A549 (cell line): ENCODE measurements at regions of chr7 and their contacts with region 1.

Region 1: GRCh38 chr7:4631664-4632171 is 50.4 kb upstream of the FOXK1 start:
- DNase-seq: peak; percentile 96 to 98
- ATAC-seq: peak; percentile 97 to 98
- H3K4me3 ChIP-seq: peak overlapping the region; percentile 24
- H3K27ac ChIP-seq: peak overlapping the region; percentile 84 to 87
- H3K4me1 ChIP-seq: peaks cover 27% of the 10 kb centered on the region
- CTCF ChIP-seq: peak; percentile 86
- EP300 ChIP-seq: peak in 1 of 2 experiments; percentile 58; a peak in 1 of 5 replicates
- POLR2A ChIP-seq: 0 out of 2 replicates have a peak, but pooled peaks have one; percentile 16
- RAD21 ChIP-seq: peak; percentile 96

Region 2: DNA sequence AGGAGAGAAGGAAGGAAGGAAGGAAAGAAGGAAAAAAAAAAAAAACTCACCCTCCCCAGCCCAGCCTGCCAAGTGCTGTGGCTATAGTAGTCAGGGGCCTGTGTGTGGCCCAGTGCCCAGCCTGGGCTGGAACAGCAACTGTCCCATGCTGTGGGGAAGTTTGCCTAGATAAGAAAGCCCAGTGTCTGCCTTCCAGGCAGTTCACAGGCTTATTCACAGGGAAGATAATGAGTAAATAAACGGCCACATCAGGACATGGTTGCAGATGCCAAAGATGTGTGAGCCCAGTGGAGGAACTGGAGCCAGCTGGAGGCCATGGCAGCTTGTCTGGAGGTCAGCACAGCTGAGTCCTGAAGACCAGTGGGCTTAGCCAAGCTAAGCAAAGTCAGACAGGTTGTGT is 82.0 kb before region 1 on chr7:
- CTCF ChIA-PET with region 1: no interaction called
- POLR2A ChIA-PET with region 1: no interaction called
- DNase-seq: no peak
- ATAC-seq: no peak
- H3K4me3 ChIP-seq: no peak overlapping the region
- H3K27ac ChIP-seq: no peak overlapping the region
- H3K4me1 ChIP-seq: no peaks in the 10 kb centered on the region
- CTCF ChIP-seq: no peak
- EP300 ChIP-seq: no peak
- POLR2A ChIP-seq: no peak
- RAD21 ChIP-seq: no peak

Region 3: GRCh38 chr7:4610768-4611467 is 20.8 kb before region 1 on chr7:
- CTCF ChIA-PET with region 1: interaction called, 63 read pairs
- POLR2A ChIA-PET with region 1: no interaction called
- DNase-seq: peak; percentile 76 to 82
- ATAC-seq: peak; percentile 88 to 94
- H3K4me3 ChIP-seq: no peak overlapping the region
- H3K27ac ChIP-seq: peak overlapping the region; percentile 23 to 33; a peak in 3 of 6 replicates
- H3K4me1 ChIP-seq: no peaks in the 10 kb centered on the region
- CTCF ChIP-seq: peak; percentile 84
- EP300 ChIP-seq: no peak
- POLR2A ChIP-seq: no peak
- RAD21 ChIP-seq: peak; percentile 87 to 92

Region 4: GRCh38 chr7:4616116-4616515 is 15.6 kb before region 1 on chr7:
- CTCF ChIA-PET with region 1: interaction called, 63 read pairs
- POLR2A ChIA-PET with region 1: interaction called, 3 read pairs
- DNase-seq: no peak
- ATAC-seq: no peak
- H3K4me3 ChIP-seq: no peak overlapping the region
- H3K27ac ChIP-seq: no peak overlapping the region
- H3K4me1 ChIP-seq: peaks cover 13% of the 10 kb centered on the region; the same call in 2 of the 3 replicates
- CTCF ChIP-seq: no peak
- EP300 ChIP-seq: no peak
- POLR2A ChIP-seq: no peak
- RAD21 ChIP-seq: no peak

Region 5: DNA sequence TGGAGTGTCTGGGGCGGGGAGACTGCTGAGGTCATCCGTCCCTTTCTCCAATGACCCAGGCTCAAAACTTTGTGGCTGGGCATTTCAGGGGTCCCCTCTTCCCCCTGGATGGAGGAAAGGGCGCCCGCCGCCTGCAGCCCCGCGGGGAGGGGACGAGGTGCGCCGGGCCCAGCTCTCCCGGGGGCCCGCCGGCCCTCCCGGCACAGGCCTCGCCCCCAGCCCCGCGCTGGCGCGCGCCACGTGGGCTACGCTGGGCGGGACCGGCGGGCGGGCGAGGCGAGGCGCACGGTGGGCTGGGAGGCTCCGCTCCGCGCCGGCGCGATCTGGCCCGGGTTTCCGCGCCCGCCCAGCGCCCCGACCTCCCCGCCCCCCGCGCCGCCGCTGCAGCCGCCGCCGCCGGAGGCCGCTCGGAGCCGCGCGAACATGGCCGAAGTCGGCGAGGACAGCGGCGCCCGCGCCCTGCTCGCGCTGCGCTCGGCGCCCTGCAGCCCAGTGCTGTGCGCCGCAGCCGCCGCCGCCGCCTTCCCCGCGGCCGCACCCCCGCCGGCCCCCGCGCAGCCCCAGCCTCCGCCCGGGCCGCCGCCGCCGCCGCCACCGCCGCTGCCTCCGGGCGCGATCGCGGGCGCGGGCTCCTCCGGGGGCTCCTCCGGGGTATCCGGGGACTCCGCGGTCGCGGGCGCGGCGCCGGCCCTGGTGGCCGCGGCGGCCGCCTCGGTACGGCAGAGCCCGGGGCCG is 50.3 kb after region 1 on chr7 and contains the start of gene FOXK1:
- CTCF ChIA-PET with region 1: interaction called, 14 read pairs
- POLR2A ChIA-PET with region 1: interaction called, 5 read pairs
- DNase-seq: peak; percentile 46 to 72
- ATAC-seq: peak; percentile 64 to 78
- H3K4me3 ChIP-seq: peak within 1 kb of the TSS; percentile 74
- H3K27ac ChIP-seq: peak within 1 kb of the TSS; percentile 90 to 99
- H3K4me1 ChIP-seq: peaks cover 11% of the 10 kb centered on the region
- CTCF ChIP-seq: no peak
- EP300 ChIP-seq: no peak
- POLR2A ChIP-seq: peak; percentile 31; the same call in 1 of the 2 replicates
- RAD21 ChIP-seq: no peak
- polyA plus RNA-seq, gene FOXK1: 6.8 and 8.3 TPM in 2 replicates

Region 6: GRCh38 chr7:4744391-4745264 is 112.9 kb after region 1 on chr7:
- CTCF ChIA-PET with region 1: interaction called, 12 read pairs
- POLR2A ChIA-PET with region 1: interaction called, 5 read pairs
- DNase-seq: peak; percentile 96 to 99
- ATAC-seq: peak; percentile 93 to 95
- H3K4me3 ChIP-seq: 0 out of 3 replicates have a peak overlapping the region, but pooled peaks have one; percentile 4
- H3K27ac ChIP-seq: peak overlapping the region; percentile 96 to 99
- H3K4me1 ChIP-seq: peaks cover 84% of the 10 kb centered on the region
- CTCF ChIP-seq: no peak
- EP300 ChIP-seq: peak; percentile 15 to 62; a peak in 3 of 5 replicates
- POLR2A ChIP-seq: no peak
- RAD21 ChIP-seq: no peak

Region 7: DNA sequence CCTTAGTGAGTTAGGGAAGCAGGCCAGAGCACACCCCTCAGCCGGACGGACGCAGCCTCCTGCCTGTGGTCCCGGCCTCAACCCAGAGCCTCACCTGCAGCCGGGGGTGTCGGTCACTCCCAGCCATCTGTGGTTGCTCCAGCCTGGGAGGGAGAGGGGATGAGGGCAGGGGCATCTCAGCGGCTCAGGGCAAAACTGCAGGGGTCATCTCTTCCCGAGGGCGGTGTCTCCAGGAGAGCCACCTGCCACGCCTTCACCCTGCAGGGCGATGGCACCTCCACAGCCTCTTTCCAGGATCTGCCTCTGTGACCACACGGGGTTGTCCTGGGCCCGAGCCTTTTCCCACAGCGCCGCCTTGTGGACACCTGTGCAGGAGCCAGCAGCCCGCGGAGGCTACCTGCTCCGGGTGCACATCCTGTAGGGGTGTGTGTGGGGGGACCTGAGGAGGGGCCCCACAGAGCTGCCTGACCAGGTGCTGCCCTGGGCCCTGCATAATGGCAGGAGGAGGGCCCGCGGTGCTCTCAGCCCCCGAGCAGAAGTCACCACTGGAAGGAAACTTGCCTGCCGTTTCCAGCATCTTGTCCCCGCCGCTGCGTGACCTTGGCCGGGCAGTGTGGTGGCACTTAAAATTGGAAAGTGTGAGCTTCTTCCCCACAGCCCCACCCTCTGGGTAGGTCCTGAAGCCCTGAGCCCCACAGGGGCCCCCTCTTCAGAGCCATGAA is 122.2 kb after region 1 on chr7:
- CTCF ChIA-PET with region 1: interaction called, 12 read pairs
- POLR2A ChIA-PET with region 1: no interaction called
- DNase-seq: peak; percentile 82 to 90
- ATAC-seq: peak; percentile 94 to 97
- H3K4me3 ChIP-seq: no peak overlapping the region
- H3K27ac ChIP-seq: peak overlapping the region; percentile 57 to 79
- H3K4me1 ChIP-seq: peaks cover 12% of the 10 kb centered on the region
- CTCF ChIP-seq: peak; percentile 90
- EP300 ChIP-seq: no peak
- POLR2A ChIP-seq: no peak
- RAD21 ChIP-seq: peak; percentile 93 to 94

Region 8: GRCh38 chr7:5183145-5183544 is 551.4 kb after region 1 on chr7:
- CTCF ChIA-PET with region 1: no interaction called
- POLR2A ChIA-PET with region 1: no interaction called
- DNase-seq: no peak
- ATAC-seq: no peak
- H3K4me3 ChIP-seq: no peak overlapping the region
- H3K27ac ChIP-seq: no peak overlapping the region
- H3K4me1 ChIP-seq: no peaks in the 10 kb centered on the region
- CTCF ChIP-seq: no peak
- EP300 ChIP-seq: no peak
- POLR2A ChIP-seq: no peak
- RAD21 ChIP-seq: no peak

Region 9: DNA sequence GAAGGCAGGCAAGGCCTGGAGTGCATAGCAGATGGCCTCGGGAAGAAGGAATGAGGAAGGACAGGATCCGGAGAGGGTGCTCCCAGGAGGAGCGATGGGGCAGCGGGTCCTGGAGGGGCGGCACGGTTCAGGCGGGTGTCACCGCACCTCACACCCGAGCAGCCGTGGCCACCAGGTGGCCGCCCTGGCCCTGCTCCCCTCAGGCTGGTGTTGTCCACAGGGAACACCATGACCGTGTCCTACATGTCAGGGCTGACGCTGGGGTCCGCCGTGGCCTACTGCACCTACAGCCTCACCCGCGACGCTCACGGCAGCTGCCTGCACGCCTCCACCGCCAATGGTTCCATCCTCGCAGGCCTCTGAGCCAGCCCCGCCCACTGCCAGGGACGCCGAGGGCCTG is 670.9 kb after region 1 on chr7:
- CTCF ChIA-PET with region 1: no interaction called
- POLR2A ChIA-PET with region 1: no interaction called
- DNase-seq: no peak
- ATAC-seq: peak; percentile 58 to 63; a peak in 5 of 6 replicates
- H3K4me3 ChIP-seq: no peak overlapping the region
- H3K27ac ChIP-seq: no peak overlapping the region
- H3K4me1 ChIP-seq: no peaks in the 10 kb centered on the region
- CTCF ChIP-seq: no peak
- EP300 ChIP-seq: no peak
- POLR2A ChIP-seq: no peak
- RAD21 ChIP-seq: no peak